ENCODE measurements at regions of chr1 and their contacts with region 1.

Region 1: GRCh38 chr1:27934818-27935549 is at the start of gene SMPDL3B:
- DNase-seq: peak; percentile 73 to 76
- H3K4me3 ChIP-seq: peak within 1 kb of the TSS; percentile 28
- H3K4me3 Mint-ChIP-seq: peak within 1 kb of the TSS; percentile 70
- H3K27ac Mint-ChIP-seq: peak within 1 kb of the TSS; percentile 66
- H3K4me1 ChIP-seq: no peaks in the 10 kb centered on the region; the same call in 1 of the 2 replicates
- H3K4me1 Mint-ChIP-seq: peaks cover 12% of the 10 kb centered on the region
- H3K27me3 ChIP-seq: no peaks in the 10 kb centered on the region
- H3K27me3 Mint-ChIP-seq: no peaks in the 10 kb centered on the region
- CTCF ChIP-seq: peak in 1 of 2 experiments; percentile 16
- total RNA-seq, gene SMPDL3B: 11.3 and 11.7 TPM in 2 replicates

Region 2: GRCh38 chr1:27807385-27807784 is 127.6 kb before region 1 on chr1:
- CTCF ChIA-PET with region 1: no interaction called
- POLR2A ChIA-PET with region 1: no interaction called
- intact Hi-C with region 1: no loop called
- DNase-seq: no peak
- H3K4me3 ChIP-seq: no peak overlapping the region
- H3K4me3 Mint-ChIP-seq: no peak overlapping the region
- H3K27ac Mint-ChIP-seq: no peak overlapping the region
- H3K4me1 ChIP-seq: no peaks in the 10 kb centered on the region
- H3K4me1 Mint-ChIP-seq: no peaks in the 10 kb centered on the region
- H3K27me3 ChIP-seq: no peaks in the 10 kb centered on the region
- H3K27me3 Mint-ChIP-seq: no peaks in the 10 kb centered on the region
- CTCF ChIP-seq: no peak

Region 3: GRCh38 chr1:27830621-27831424 is 104.2 kb before region 1 on chr1 and contains the start of gene PPP1R8:
- CTCF ChIA-PET with region 1: no interaction called
- POLR2A ChIA-PET with region 1: no interaction called
- intact Hi-C with region 1: no loop called
- DNase-seq: peak; percentile 91 to 93
- H3K4me3 ChIP-seq: peak within 1 kb of the TSS; percentile 91
- H3K4me3 Mint-ChIP-seq: peak within 1 kb of the TSS; percentile 83
- H3K27ac Mint-ChIP-seq: peak within 1 kb of the TSS; percentile 93
- H3K4me1 ChIP-seq: peaks cover 6% of the 10 kb centered on the region; the same call in 1 of the 2 replicates
- H3K4me1 Mint-ChIP-seq: peaks cover 10% of the 10 kb centered on the region
- H3K27me3 ChIP-seq: no peaks in the 10 kb centered on the region
- H3K27me3 Mint-ChIP-seq: no peaks in the 10 kb centered on the region
- CTCF ChIP-seq: no peak
- total RNA-seq, gene PPP1R8: 37.2 and 40.6 TPM in 2 replicates

Region 4: GRCh38 chr1:27959400-27960217 is 24.6 kb after region 1 on chr1 and contains the start of gene XKR8:
- CTCF ChIA-PET with region 1: interaction called, 4 read pairs
- POLR2A ChIA-PET with region 1: interaction called, 11 read pairs
- intact Hi-C with region 1: no loop called
- DNase-seq: peak; percentile 84
- H3K4me3 ChIP-seq: peak within 1 kb of the TSS; percentile 63
- H3K4me3 Mint-ChIP-seq: peak within 1 kb of the TSS; percentile 77
- H3K27ac Mint-ChIP-seq: peak within 1 kb of the TSS; percentile 83
- H3K4me1 ChIP-seq: no peaks in the 10 kb centered on the region
- H3K4me1 Mint-ChIP-seq: no peaks in the 10 kb centered on the region
- H3K27me3 ChIP-seq: no peaks in the 10 kb centered on the region
- H3K27me3 Mint-ChIP-seq: no peaks in the 10 kb centered on the region
- CTCF ChIP-seq: peak; percentile 35 to 67
- total RNA-seq, gene XKR8: 8.9 and 10.4 TPM in 2 replicates